ENCODE measurements at regions of chr7 and their contacts with region 1.

Region 1: DNA sequence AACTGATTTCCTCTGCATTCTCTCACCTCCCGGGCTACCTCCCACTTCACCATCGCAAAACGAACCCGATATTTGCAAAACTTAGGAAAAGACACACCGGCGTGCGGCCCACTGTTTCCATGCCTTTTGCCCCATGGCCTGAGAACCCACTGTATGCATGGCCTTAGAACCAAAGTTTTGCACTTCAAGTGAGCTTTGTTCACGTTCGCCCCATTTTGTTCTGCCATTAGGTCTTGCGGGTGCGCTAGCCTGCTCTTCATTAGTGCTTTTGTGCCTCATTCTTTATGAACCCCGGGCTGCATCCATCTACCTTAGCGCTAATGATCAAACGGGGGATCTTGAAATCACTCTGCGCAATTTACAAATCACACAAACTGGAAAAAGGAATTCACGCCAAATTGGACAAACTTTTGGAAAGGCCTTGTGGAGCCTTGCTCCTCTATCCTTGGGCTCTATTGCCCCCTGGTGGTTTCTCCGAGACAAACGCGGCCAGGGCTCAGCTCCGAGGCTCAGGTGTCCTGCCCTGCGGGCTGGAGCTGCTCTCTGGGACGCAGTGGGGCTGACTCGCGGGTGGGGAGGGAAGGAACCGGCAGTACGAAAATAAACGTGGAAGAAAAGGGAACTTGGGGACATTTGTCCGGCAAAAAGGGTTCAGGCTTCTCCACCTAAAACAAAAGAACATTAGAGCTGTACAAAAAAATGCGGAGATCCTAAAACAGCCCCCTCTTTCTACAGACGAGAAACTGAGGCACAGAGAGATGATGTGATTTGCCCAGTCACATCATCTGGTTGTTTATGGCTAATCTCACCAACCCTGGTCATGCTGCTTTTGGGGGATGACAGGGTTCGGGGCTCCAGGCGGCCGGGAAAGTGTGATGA is 300.4 kb upstream of the NFE2L3 start:
- DNase-seq: peak; percentile 85 to 92 (median 91)
- ATAC-seq: peak; percentile 77
- H3K4me3 ChIP-seq: no peak overlapping the region
- H3K4me1 ChIP-seq: peaks cover 27% of the 10 kb centered on the region
- CTCF ChIP-seq: peak; percentile 84

Region 2: GRCh38 chr7:24956021-24956420 is 895.5 kb before region 1 on chr7:
- intact Hi-C with region 1: no loop called
- DNase-seq: no peak
- ATAC-seq: no peak
- H3K4me3 ChIP-seq: no peak overlapping the region
- H3K4me1 ChIP-seq: no peaks in the 10 kb centered on the region
- CTCF ChIP-seq: no peak

Region 3: GRCh38 chr7:25389489-25390106 is 462.0 kb before region 1 on chr7:
- intact Hi-C with region 1: loop called (anchors 5 kb)
- DNase-seq: peak in 1 of 3 donors; percentile 73
- ATAC-seq: peak; percentile 79
- H3K4me3 ChIP-seq: no peak overlapping the region
- H3K4me1 ChIP-seq: no peaks in the 10 kb centered on the region
- CTCF ChIP-seq: no peak

Region 4: DNA sequence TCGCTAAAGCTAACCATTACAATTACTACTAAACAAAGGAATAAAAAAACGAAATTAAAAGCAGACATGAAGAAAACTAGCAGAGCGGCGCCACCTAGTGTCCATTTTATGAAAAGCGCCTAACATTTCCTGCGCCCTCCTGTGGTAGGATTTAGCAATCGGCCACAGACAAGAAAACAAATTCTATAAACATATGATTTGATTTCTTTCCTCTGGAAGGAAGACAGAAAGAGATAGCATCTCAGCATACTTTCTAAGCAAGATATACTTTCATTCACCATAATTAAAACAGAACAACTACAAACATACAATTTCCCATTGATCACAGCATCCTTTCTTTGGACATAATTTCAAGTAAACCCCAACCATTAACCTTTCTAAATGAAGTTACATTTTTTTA is 285.6 kb before region 1 on chr7:
- intact Hi-C with region 1: loop called (anchors 5 kb)
- DNase-seq: peak in 2 of 3 donors; percentile 74 to 84
- ATAC-seq: peak; percentile 50
- H3K4me3 ChIP-seq: no peak overlapping the region
- H3K4me1 ChIP-seq: no peaks in the 10 kb centered on the region
- CTCF ChIP-seq: peak; percentile 97

Region 5: GRCh38 chr7:25663877-25664276 is 187.7 kb before region 1 on chr7:
- intact Hi-C with region 1: no loop called
- DNase-seq: no peak
- ATAC-seq: peak; percentile 57
- H3K4me3 ChIP-seq: no peak overlapping the region
- H3K4me1 ChIP-seq: peaks cover 6% of the 10 kb centered on the region
- CTCF ChIP-seq: no peak

Region 6: GRCh38 chr7:27160546-27161213 is 1309.1 kb after region 1 on chr7:
- intact Hi-C with region 1: loop called in 1 of 2 experiments (anchors 5 kb)
- DNase-seq: peak; percentile 93 to 94 (median 94)
- ATAC-seq: peak; percentile 70
- H3K4me3 ChIP-seq: peak overlapping the region; percentile 15
- H3K4me1 ChIP-seq: peaks cover 19% of the 10 kb centered on the region
- CTCF ChIP-seq: peak; percentile 99

Measured in mucosa of descending colon (tissue), 3 donors.